Heart left ventricle (tissue), 16 donors: ENCODE measurements at regions of chr1 and their contacts with region 1.

Region 1: GRCh38 chr1:195939844-195940243 is 668.4 kb downstream of the KCNT2 start:
- DNase-seq: no peak
- ATAC-seq: no peak
- H3K4me3 ChIP-seq: no peak overlapping the region
- H3K27ac ChIP-seq: no peak overlapping the region
- H3K4me1 ChIP-seq: no peaks in the 10 kb centered on the region
- H3K27me3 ChIP-seq: no peaks in the 10 kb centered on the region
- CTCF ChIP-seq: peak in 6 of 12 donors; percentile 3 to 36 (median 24)
- POLR2A ChIP-seq: no peak

Region 2: DNA sequence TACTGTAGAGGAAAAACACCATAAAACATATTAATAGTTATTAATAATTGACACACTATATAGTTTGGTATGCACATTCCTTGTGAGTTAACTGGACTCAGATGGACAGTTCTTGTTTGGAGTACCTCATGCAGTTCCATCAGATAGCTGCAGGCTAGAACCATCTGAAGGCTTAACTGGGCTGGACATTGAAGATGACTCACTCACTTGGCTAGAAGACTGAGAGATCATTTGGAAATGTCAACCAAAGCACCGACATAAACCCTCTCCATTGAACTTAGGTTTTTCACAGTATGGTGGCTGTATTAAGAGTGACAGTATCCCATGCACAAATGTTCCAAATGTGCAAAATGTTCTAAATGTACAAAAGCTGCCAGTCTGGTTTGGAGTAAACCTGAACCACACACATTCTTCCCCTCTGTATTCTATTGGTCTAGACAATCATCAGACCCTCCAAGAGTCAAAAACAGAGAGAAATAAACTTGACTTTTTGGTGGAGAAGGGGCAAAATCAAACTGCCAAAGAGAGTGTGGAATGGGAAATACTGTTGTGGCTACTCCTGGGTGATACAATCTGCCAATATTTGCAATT is 40.0 kb before region 1 on chr1:
- intact Hi-C with region 1: no loop called
- DNase-seq: no peak
- ATAC-seq: peak in 1 of 4 donors; percentile 22
- H3K4me3 ChIP-seq: no peak overlapping the region
- H3K27ac ChIP-seq: no peak overlapping the region
- H3K4me1 ChIP-seq: peaks cover 0 to 3% (median 0%) of the 10 kb centered on the region in 12 donors
- H3K27me3 ChIP-seq: no peaks in the 10 kb centered on the region
- CTCF ChIP-seq: no peak
- POLR2A ChIP-seq: no peak

Region 3: GRCh38 chr1:196309386-196309785 is 369.5 kb after region 1 on chr1:
- intact Hi-C with region 1: loop called in 3 of 10 experiments (anchors 5 to 10 kb)
- DNase-seq: no peak
- ATAC-seq: no peak
- H3K4me3 ChIP-seq: no peak overlapping the region
- H3K27ac ChIP-seq: no peak overlapping the region
- H3K4me1 ChIP-seq: no peaks in the 10 kb centered on the region
- H3K27me3 ChIP-seq: no peaks in the 10 kb centered on the region
- CTCF ChIP-seq: peak in 8 of 12 donors; percentile 8 to 47 (median 28)
- POLR2A ChIP-seq: no peak